Posterior vena cava (tissue), 2 donors: ENCODE measurements at regions of chr5 and their contacts with region 1.

Region 1: GRCh38 chr5:160727296-160727997 is 124.6 kb downstream of the ATP10B start:
- DNase-seq: no peak

Region 2: DNA sequence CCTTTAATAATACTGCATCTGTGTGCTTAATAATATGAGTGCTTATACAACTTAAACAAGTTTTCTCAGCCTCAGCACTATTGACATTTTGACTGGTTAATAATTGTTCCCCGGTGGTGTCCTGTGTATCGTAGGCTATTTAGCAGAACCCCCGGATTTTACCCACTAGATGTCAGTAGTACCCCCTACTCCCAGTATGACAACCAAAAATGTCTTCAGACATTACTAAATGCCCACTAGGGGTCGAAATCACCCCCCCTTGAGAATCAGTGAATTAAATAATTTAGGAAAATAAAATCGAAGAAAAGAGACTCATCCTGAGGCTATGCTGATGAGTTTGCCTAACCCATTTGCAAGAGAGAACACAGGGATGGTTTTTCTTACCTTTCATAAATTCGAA is 41.8 kb before region 1 on chr5:
- intact Hi-C with region 1: loop called in 1 of 2 experiments (anchors 1 kb)
- DNase-seq: no peak